Caco-2 (cell line): ENCODE measurements at regions of chr2 and their contacts with region 1.

Region 1: DNA sequence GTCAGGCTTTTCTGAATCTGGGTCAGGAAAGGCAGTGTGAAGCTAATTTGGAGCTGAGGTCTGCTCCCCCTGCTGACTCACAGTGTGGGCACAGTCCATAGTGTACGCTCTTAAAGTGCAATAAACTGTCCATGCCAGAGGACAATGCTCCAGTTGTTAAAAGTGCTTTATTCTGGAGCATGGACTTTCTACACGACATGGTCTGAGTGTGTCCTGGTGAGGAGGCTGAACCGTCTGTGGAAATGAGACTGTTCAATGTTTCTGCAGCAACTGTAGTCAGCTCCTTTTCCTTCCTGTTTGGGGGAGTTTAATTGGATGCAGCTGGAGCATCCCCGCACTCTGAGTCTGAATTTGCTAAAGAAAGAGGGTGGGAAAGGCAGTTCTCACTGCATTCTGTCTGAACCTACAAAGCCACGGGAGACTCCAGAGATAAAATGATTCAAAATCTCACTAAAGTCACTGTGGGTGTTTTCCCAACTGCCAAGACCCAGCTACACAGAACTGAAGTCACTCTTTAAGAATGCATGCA is 110.2 kb upstream of the TRIB2 start:
- DNase-seq: peak in 1 of 2 experiments; percentile 6
- H3K4me3 ChIP-seq: no peak overlapping the region
- H3K4me3 Mint-ChIP-seq: no peak overlapping the region
- H3K27ac Mint-ChIP-seq: no peak overlapping the region
- H3K4me1 ChIP-seq: no peaks in the 10 kb centered on the region
- H3K4me1 Mint-ChIP-seq: no peaks in the 10 kb centered on the region
- H3K27me3 ChIP-seq: no peaks in the 10 kb centered on the region
- H3K27me3 Mint-ChIP-seq: peaks cover 11% of the 10 kb centered on the region
- CTCF ChIP-seq: peak in 1 of 2 experiments; percentile 4

Region 2: DNA sequence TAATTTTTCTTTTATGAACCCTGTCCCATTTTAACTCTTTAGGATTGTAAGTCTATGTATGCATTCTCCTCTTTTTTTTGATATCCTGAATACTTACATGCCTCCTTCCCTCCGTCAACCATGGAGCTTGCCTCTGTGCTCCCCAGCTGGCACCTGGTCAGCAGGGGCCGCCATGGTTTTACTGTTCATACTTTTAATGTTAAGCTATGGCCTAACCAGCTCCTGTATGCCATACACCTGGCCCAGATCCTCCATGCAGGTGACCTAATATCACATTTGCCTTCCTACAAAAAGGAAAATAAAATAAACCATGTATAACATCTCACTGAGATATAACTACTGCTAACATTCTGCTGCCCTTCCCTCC is 172.9 kb before region 1 on chr2:
- CTCF ChIA-PET with region 1: interaction called, 10 read pairs
- POLR2A ChIA-PET with region 1: no interaction called
- intact Hi-C with region 1: loop called (anchors 1 kb)
- DNase-seq: peak; percentile 41 to 49
- H3K4me3 ChIP-seq: no peak overlapping the region
- H3K4me3 Mint-ChIP-seq: no peak overlapping the region
- H3K27ac Mint-ChIP-seq: no peak overlapping the region
- H3K4me1 ChIP-seq: no peaks in the 10 kb centered on the region
- H3K4me1 Mint-ChIP-seq: no peaks in the 10 kb centered on the region
- H3K27me3 ChIP-seq: no peaks in the 10 kb centered on the region
- H3K27me3 Mint-ChIP-seq: peaks cover 4% of the 10 kb centered on the region
- CTCF ChIP-seq: peak in 1 of 2 experiments; percentile 53

Region 3: GRCh38 chr2:12675352-12675795 is 68.8 kb after region 1 on chr2:
- CTCF ChIA-PET with region 1: no interaction called
- POLR2A ChIA-PET with region 1: no interaction called
- intact Hi-C with region 1: no loop called
- DNase-seq: no peak
- H3K4me3 ChIP-seq: no peak overlapping the region
- H3K4me3 Mint-ChIP-seq: no peak overlapping the region
- H3K27ac Mint-ChIP-seq: no peak overlapping the region
- H3K4me1 ChIP-seq: no peaks in the 10 kb centered on the region
- H3K4me1 Mint-ChIP-seq: no peaks in the 10 kb centered on the region
- H3K27me3 ChIP-seq: no peaks in the 10 kb centered on the region
- H3K27me3 Mint-ChIP-seq: peaks cover 6% of the 10 kb centered on the region
- CTCF ChIP-seq: no peak